SK-N-SH (cell line): ENCODE measurements at regions of chr11 and their contacts with region 1.

Region 1: DNA sequence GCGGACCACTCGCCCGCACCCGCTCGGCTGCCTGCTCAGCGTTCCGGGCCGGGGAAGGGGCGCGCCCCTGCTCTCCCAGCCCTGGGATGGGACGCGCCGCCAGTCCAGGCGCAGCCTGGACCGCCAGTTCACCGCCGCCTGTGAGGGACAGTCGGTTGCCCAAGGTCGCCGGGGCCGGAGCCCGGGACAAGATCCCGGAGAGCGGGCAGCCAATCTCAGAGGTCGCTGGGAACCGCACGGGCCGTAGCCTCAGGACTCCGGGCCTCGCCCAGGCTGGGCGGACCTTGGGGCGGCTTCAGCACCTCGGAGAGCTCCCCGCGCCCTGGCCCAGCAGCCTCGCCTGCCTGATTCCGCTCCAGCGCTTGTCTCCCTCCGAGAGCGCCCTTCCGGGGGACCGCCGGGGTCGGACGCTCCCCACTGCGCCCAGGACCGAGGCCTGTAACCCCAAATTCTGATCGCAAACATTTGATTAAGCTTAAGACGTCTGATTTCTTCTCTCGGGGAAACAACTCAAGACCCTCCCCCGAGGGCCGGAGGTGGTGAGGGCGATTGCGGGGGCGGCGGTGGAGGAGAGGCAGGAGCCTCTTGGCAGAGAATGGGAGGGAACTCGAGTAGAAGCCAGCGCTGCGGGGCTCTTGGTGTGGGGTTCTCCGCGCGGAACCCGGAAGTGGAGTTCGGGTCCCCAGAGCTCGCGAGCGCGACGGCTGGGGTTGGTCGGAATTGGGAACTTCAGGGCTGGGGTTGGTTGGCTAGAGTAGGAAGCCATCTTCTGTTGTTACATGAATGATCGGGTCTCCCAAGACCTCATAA is 1.1 kb upstream of the CHRM4 start:
- DNase-seq: peak; percentile 80
- H3K4me3 ChIP-seq: peak overlapping the region; percentile 52 to 60
- H3K27ac ChIP-seq: no peak overlapping the region
- H3K4me1 ChIP-seq: peaks cover 0 to 27% of the 10 kb centered on the region in 2 experiments; a peak in 2 of 4 replicates
- H3K27me3 ChIP-seq: peaks cover 15% of the 10 kb centered on the region
- CTCF ChIP-seq: no peak
- EP300 ChIP-seq: no peak
- RAD21 ChIP-seq: no peak

Region 2: GRCh38 chr11:46305295-46305694 is 87.3 kb before region 1 on chr11:
- CTCF ChIA-PET with region 1: no interaction called
- POLR2A ChIA-PET with region 1: no interaction called
- DNase-seq: peak; percentile 50
- H3K4me3 ChIP-seq: no peak overlapping the region
- H3K27ac ChIP-seq: no peak overlapping the region
- H3K4me1 ChIP-seq: peaks cover 0 to 2% of the 10 kb centered on the region in 2 experiments; a peak in 1 of 4 replicates
- H3K27me3 ChIP-seq: no peaks in the 10 kb centered on the region
- CTCF ChIP-seq: no peak
- EP300 ChIP-seq: no peak
- RAD21 ChIP-seq: no peak

Region 3: GRCh38 chr11:46367244-46367915 is 25.2 kb before region 1 on chr11:
- CTCF ChIA-PET with region 1: interaction called, 77 read pairs
- POLR2A ChIA-PET with region 1: no interaction called
- DNase-seq: peak; percentile 87
- H3K4me3 ChIP-seq: peak overlapping the region in 1 of 2 experiments; percentile 48; a peak in 1 of 4 replicates
- H3K27ac ChIP-seq: no peak overlapping the region; a peak in 1 of 4 replicates
- H3K4me1 ChIP-seq: peaks cover 17 to 41% of the 10 kb centered on the region in 2 experiments; a peak in 3 of 4 replicates
- H3K27me3 ChIP-seq: no peaks in the 10 kb centered on the region
- CTCF ChIP-seq: peak; percentile 83
- EP300 ChIP-seq: no peak
- RAD21 ChIP-seq: peak; percentile 67

Region 4: GRCh38 chr11:46410021-46410420 is 17.4 kb after region 1 on chr11:
- CTCF ChIA-PET with region 1: interaction called, 96 read pairs
- POLR2A ChIA-PET with region 1: no interaction called
- DNase-seq: no peak
- H3K4me3 ChIP-seq: no peak overlapping the region
- H3K27ac ChIP-seq: no peak overlapping the region
- H3K4me1 ChIP-seq: peaks cover 0 to 5% of the 10 kb centered on the region in 2 experiments; a peak in 1 of 4 replicates
- H3K27me3 ChIP-seq: no peaks in the 10 kb centered on the region
- CTCF ChIP-seq: peak; percentile 19; the same call in 1 of the 2 replicates
- EP300 ChIP-seq: no peak
- RAD21 ChIP-seq: 0 out of 2 replicates have a peak, but pooled peaks have one; percentile 20

Region 5: DNA sequence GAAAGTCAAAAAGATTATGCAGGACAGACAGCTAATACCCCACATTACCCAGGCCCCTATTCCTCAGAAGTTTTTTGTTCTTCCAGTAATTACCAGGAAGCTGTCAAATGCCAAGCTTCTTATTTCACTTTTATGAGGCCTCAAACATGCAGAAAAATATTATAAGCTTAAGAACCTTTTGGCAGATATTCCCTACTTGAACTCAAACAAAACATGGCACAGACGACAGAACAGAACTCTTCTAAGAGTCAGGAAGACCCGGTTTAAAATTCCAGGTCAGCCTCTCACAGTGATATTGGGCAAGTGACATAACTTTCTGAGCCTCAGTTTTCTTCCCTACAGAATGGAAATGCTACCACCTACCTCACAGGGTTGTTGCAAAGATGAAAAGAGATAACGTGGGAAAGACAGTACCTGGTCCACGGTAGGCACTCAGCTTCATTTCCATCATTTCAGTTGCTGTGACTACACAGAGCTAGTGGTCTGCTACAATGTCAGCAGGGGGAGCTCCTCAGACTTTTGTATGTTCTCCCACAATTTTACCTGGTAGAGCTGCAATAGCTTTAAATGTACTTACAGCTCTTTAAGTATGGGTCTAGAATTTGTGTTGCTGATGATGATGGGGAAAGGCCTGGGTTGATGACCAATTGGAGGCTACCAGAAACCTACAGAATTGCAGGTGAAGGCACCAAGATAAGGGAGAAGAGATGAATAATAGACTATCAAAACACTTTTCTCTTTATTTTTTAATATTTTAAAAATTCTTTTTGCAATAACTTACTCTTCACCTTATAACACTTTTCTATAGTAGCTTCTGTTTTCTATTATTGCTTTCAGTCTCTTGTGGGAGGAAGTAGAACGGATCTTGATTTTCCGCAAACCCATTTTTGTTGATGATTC is 97.3 kb after region 1 on chr11:
- CTCF ChIA-PET with region 1: interaction called, 22 read pairs
- POLR2A ChIA-PET with region 1: no interaction called
- DNase-seq: peak; percentile 54
- H3K4me3 ChIP-seq: no peak overlapping the region
- H3K27ac ChIP-seq: no peak overlapping the region
- H3K4me1 ChIP-seq: peaks cover 7 to 21% of the 10 kb centered on the region in 2 experiments; a peak in 2 of 4 replicates
- H3K27me3 ChIP-seq: no peaks in the 10 kb centered on the region
- CTCF ChIP-seq: peak; percentile 72
- EP300 ChIP-seq: no peak
- RAD21 ChIP-seq: peak; percentile 74

Region 6: DNA sequence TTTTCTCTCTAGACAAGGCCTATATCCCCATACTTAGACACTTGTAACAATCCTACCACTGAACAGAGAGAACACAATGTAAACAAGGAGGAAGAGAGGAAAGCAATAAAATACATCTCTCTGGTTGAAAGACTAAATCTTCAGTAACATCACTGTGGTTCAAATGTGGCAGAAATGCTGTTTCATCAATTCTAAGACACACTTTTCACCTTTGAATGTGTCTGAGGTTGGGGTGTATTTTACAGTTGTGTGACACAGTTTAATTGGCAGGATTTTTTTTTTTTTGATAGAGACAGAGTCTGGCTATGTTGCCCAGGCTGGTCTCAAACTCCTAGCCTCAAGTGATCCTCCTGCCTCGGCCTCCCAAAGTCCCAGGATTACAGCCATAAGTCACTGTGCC is 121.7 kb after region 1 on chr11:
- CTCF ChIA-PET with region 1: interaction called, 12 read pairs
- POLR2A ChIA-PET with region 1: no interaction called
- DNase-seq: no peak
- H3K4me3 ChIP-seq: no peak overlapping the region
- H3K27ac ChIP-seq: peak overlapping the region; percentile 52 to 96; a peak in 3 of 4 replicates
- H3K4me1 ChIP-seq: peaks cover 16 to 26% of the 10 kb centered on the region in 2 experiments; a peak in 3 of 4 replicates
- H3K27me3 ChIP-seq: no peaks in the 10 kb centered on the region
- CTCF ChIP-seq: no peak
- EP300 ChIP-seq: no peak
- RAD21 ChIP-seq: no peak

Region 7: DNA sequence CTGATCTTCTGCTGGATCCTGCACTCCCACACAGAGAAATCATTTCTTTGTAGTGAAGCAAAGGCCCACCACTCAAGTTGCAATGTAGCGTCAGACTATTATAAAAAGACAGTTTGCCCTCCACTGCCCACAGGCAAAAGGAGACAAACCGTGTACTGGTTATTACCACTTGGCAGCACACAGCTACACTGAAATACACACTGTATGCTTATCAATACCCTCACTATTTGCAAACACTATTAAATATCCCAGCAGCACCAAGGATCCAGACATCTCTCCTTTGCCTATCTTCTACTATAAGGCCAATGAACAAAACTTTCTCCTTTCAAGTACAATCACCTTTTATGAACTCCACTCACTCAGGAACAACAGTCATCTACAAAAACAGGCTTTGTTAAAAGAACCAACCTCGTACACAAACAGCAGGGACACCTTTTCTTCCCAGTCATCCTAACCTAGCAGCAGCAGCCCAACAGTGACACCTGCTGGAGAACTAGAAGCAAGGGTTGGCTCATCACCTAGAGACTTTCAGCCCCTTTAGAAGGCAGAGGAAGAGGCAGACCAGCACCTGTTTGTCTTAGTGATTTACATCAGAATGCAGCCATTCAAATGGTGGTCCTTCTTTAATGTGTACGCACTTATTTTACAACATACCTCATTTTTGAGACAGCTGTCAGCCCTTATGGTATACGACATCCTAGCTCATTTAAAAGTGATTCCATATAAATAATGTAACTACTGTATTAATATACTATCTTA is 145.1 kb after region 1 on chr11:
- CTCF ChIA-PET with region 1: interaction called, 204 read pairs
- POLR2A ChIA-PET with region 1: no interaction called
- DNase-seq: peak; percentile 77
- H3K4me3 ChIP-seq: peak overlapping the region in 1 of 2 experiments; percentile 28; a peak in 1 of 4 replicates
- H3K27ac ChIP-seq: no peak overlapping the region
- H3K4me1 ChIP-seq: peaks cover 0 to 6% of the 10 kb centered on the region in 2 experiments; a peak in 2 of 4 replicates
- H3K27me3 ChIP-seq: no peaks in the 10 kb centered on the region
- CTCF ChIP-seq: peak; percentile 92
- EP300 ChIP-seq: no peak
- RAD21 ChIP-seq: peak; percentile 96

Region 8: DNA sequence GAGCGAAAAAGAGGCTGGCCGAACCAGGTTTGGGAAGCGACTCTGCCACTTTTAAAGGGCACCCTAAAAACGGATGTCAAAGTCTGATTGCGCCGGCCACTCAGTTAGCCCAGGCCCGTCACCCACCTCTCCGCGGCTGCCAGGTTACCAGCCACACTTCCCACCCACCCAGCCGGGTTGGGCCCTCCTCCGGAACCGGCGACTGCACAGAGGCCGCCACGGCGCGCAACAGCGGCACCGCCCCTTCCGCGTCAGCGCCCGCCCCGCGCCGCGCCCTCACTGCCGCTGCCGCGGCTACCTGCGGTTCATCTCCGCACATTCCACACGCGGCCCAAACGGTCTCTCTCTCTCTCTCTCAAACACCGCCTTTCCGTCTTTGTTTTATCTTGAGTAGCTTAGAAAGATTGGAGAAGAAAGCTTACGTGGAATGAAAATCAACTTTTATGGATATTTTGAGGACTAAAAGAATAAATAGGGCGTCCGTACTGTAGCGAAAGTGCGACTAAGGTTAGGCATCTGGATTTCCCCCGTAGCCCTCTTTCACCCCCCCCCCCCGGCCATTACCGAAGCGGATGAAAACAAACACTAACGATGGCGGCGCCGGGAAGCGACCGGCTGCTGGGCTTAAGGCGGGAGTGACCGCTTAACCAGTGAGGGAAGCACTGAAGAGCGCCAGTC is 224.5 kb after region 1 on chr11 and contains the starts of genes ATG13 and HARBI1:
- CTCF ChIA-PET with region 1: interaction called, 17 read pairs
- POLR2A ChIA-PET with region 1: no interaction called
- DNase-seq: peak; percentile 94
- H3K4me3 ChIP-seq: peak within 1 kb of the TSS; percentile 88 to 100
- H3K27ac ChIP-seq: peak within 1 kb of the TSS; percentile 93 to 94
- H3K4me1 ChIP-seq: peaks cover 6 to 15% of the 10 kb centered on the region in 2 experiments; a peak in 3 of 4 replicates
- H3K27me3 ChIP-seq: no peaks in the 10 kb centered on the region
- CTCF ChIP-seq: no peak
- EP300 ChIP-seq: peak; percentile 61 to 91; a peak in 3 of 4 replicates
- RAD21 ChIP-seq: no peak
- polyA plus RNA-seq, gene ATG13: 39.4 and 52.8 TPM in 2 replicates
- polyA plus RNA-seq, gene HARBI1: 2.4 and 3.3 TPM in 2 replicates